ENCODE measurements at regions of chr9 and their contacts with region 1.

Region 1: GRCh38 chr9:129641746-129642513 is at the start of gene ASB6:
- DNase-seq: peak; percentile 78 to 97 (median 93)
- ATAC-seq: peak; percentile 76
- H3K4me3 ChIP-seq: peak within 1 kb of the TSS; percentile 98 to 99
- H3K4me3 Mint-ChIP-seq: peak within 1 kb of the TSS; percentile 85
- H3K27ac ChIP-seq: peak within 1 kb of the TSS; percentile 68 to 80
- H3K27ac Mint-ChIP-seq: peak within 1 kb of the TSS; percentile 89
- H3K4me1 ChIP-seq: peaks cover 23% of the 10 kb centered on the region
- H3K4me1 Mint-ChIP-seq: peaks cover 24% of the 10 kb centered on the region
- H3K27me3 ChIP-seq: no peaks in the 10 kb centered on the region
- H3K27me3 Mint-ChIP-seq: no peaks in the 10 kb centered on the region
- CTCF ChIP-seq: peak; percentile 100
- total RNA-seq, gene ASB6: 39.9 to 42.0 TPM

Region 2: GRCh38 chr9:129661029-129661428 is 19.1 kb after region 1 on chr9:
- CTCF ChIA-PET with region 1: no interaction called
- POLR2A ChIA-PET with region 1: no interaction called
- intact Hi-C with region 1: no loop called
- DNase-seq: no peak
- ATAC-seq: no peak
- H3K4me3 ChIP-seq: no peak overlapping the region
- H3K4me3 Mint-ChIP-seq: no peak overlapping the region
- H3K27ac ChIP-seq: no peak overlapping the region
- H3K27ac Mint-ChIP-seq: no peak overlapping the region
- H3K4me1 ChIP-seq: no peaks in the 10 kb centered on the region
- H3K4me1 Mint-ChIP-seq: peaks cover 5% of the 10 kb centered on the region
- H3K27me3 ChIP-seq: no peaks in the 10 kb centered on the region
- H3K27me3 Mint-ChIP-seq: peaks cover 8% of the 10 kb centered on the region
- CTCF ChIP-seq: no peak

Region 3: GRCh38 chr9:129802851-129803675 is 161.1 kb after region 1 on chr9 and contains the start of gene TOR1B:
- CTCF ChIA-PET with region 1: no interaction called
- POLR2A ChIA-PET with region 1: no interaction called
- intact Hi-C with region 1: loop called (anchors 1 kb)
- DNase-seq: peak; percentile 88 to 99 (median 95)
- ATAC-seq: peak; percentile 95
- H3K4me3 ChIP-seq: peak within 1 kb of the TSS; percentile 81 to 96
- H3K4me3 Mint-ChIP-seq: peak within 1 kb of the TSS; percentile 90
- H3K27ac ChIP-seq: peak within 1 kb of the TSS; percentile 72 to 90
- H3K27ac Mint-ChIP-seq: peak within 1 kb of the TSS; percentile 94
- H3K4me1 ChIP-seq: peaks cover 20% of the 10 kb centered on the region
- H3K4me1 Mint-ChIP-seq: peaks cover 28% of the 10 kb centered on the region
- H3K27me3 ChIP-seq: no peaks in the 10 kb centered on the region
- H3K27me3 Mint-ChIP-seq: no peaks in the 10 kb centered on the region
- CTCF ChIP-seq: no peak
- total RNA-seq, gene TOR1B: 21.3 to 22.4 TPM

Measured in CD8-positive, alpha-beta T cell (primary cell).